Endothelial cell of umbilical vein (primary cell): ENCODE measurements at regions of chr15 and their contacts with region 1.

Region 1: DNA sequence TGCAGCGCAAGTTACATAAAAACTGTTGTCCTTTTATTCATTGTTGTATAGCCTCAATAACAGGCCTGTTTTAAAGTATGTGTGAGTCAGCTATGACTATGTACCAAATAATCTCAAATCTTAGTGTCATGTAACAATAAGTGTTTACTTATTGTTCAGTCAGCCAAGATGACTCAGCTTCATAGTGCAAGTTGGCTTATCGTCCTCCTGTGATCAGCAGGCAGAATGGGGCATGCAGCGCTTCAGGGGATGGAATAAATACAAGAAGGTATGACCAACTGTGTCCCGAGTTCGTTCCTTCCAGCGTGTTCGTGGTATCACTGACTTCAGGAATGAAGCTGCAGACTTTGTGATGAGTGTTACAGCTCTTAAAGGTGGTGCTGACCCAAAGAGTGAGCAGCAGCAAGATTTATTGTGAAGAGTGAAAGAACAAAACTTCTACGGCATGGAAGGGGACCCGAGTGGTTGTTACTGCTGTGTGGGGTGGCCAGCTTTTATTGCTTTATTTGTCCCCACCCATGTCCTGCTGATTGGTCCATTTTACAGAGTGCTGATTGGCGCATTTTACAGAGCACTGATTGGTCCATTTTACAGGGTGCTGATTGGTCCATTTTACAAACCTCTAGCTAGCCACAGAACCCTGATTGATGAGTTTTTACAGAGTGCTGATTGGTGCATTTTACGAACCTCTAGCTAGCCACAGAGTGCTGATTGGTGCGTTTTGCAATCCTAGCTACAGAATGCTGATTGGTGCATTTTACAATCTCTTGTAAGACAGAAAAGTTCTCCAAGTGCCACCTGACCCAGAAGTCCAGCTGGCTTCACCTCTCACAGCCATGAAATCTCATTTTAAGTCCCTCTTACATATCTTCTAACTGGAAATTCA is 1016.0 kb downstream of the MCTP2 start:
- DNase-seq: peak; percentile 91
- H3K4me3 ChIP-seq: no peak overlapping the region
- H3K27ac ChIP-seq: peak overlapping the region; percentile 53
- H3K4me1 ChIP-seq: peaks cover 15% of the 10 kb centered on the region
- H3K27me3 ChIP-seq: no peaks in the 10 kb centered on the region
- CTCF ChIP-seq: no peak
- POLR2A ChIP-seq: peak; percentile 16

Region 2: GRCh38 chr15:93656040-93656439 is 1591.3 kb before region 1 on chr15:
- CTCF ChIA-PET with region 1: no interaction called
- POLR2A ChIA-PET with region 1: no interaction called
- dilution Hi-C with region 1: no loop called
- intact Hi-C with region 1: no loop called
- DNase-seq: no peak
- H3K4me3 ChIP-seq: no peak overlapping the region
- H3K27ac ChIP-seq: no peak overlapping the region
- H3K4me1 ChIP-seq: no peaks in the 10 kb centered on the region
- H3K27me3 ChIP-seq: no peaks in the 10 kb centered on the region
- CTCF ChIP-seq: no peak
- POLR2A ChIP-seq: no peak

Region 3: GRCh38 chr15:94607176-94607654 is 640.1 kb before region 1 on chr15:
- CTCF ChIA-PET with region 1: no interaction called
- POLR2A ChIA-PET with region 1: no interaction called
- dilution Hi-C with region 1: no loop called
- intact Hi-C with region 1: loop called (anchors 1 kb)
- DNase-seq: peak; percentile 96
- H3K4me3 ChIP-seq: no peak overlapping the region
- H3K27ac ChIP-seq: peak overlapping the region; percentile 97
- H3K4me1 ChIP-seq: peaks cover 40% of the 10 kb centered on the region
- H3K27me3 ChIP-seq: no peaks in the 10 kb centered on the region
- CTCF ChIP-seq: no peak
- POLR2A ChIP-seq: peak; percentile 75

Region 4: GRCh38 chr15:95086531-95087252 is 160.7 kb before region 1 on chr15:
- CTCF ChIA-PET with region 1: no interaction called
- POLR2A ChIA-PET with region 1: no interaction called
- dilution Hi-C with region 1: no loop called
- intact Hi-C with region 1: loop called (anchors 5 kb)
- DNase-seq: peak; percentile 56
- H3K4me3 ChIP-seq: no peak overlapping the region
- H3K27ac ChIP-seq: no peak overlapping the region
- H3K4me1 ChIP-seq: peaks cover 12% of the 10 kb centered on the region
- H3K27me3 ChIP-seq: no peaks in the 10 kb centered on the region
- CTCF ChIP-seq: no peak
- POLR2A ChIP-seq: no peak

Region 5: DNA sequence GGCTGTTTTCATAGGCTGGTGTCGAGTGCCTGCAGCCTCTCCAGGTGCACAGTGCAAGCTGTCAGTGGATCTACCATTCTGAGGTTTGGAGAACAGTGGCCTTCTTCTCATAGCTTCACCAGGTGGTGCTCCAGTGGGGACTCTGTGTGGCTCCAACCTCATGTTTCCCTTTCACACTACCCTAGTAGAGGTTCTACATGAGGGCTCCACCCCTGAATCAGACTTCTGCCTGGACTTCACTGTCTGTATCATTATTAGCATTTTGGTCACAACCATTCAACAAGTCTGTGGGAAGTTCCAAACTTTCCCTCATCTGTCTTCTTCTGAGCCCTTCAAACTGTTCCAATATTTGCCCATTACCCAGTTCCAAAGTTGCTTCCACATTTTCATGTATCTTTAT is 12.3 kb before region 1 on chr15:
- CTCF ChIA-PET with region 1: no interaction called
- POLR2A ChIA-PET with region 1: no interaction called
- dilution Hi-C with region 1: no loop called
- intact Hi-C with region 1: no loop called
- DNase-seq: no peak
- H3K4me3 ChIP-seq: no peak overlapping the region
- H3K27ac ChIP-seq: no peak overlapping the region
- H3K4me1 ChIP-seq: no peaks in the 10 kb centered on the region
- H3K27me3 ChIP-seq: no peaks in the 10 kb centered on the region
- CTCF ChIP-seq: no peak
- POLR2A ChIP-seq: no peak